ENCODE measurements at regions of chr13 and their contacts with region 1.

Region 1: DNA sequence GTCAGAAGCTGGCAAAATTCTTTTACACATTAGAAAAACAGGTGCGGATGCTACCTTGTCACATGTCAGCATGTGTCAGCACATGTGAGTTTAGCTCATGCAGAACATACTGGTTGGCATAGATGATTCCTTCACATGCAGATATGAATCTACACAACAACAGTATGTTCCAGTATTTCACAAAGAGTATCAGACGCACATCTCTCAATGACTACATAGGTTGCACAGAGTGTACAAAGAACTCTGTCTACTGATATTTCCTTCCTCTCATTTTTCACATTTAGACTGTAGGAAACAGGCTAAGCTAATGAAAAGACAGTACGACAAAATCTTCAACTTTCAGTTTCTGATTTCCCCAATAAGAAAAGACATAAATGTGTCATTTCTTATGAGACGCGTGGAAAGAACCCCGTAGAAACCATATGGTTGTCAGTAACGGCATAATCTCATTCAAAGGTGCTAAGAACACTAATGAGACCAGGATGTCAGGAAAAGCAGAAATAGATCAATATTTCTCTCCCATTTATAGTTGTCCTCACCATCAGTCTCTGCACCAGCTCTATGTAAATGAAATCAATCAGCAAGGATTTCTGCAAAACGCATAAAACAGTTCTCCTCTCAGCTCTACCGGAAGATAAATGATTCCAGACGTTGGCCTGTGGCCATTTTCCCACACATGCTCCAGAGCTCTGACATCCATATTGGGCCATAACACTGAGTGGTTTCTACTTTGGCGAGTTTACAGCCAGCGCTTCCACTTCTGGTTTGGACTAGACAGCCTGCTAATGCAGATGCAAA is 81.2 kb downstream of the STARD13 start:
- DNase-seq: peak; percentile 78
- ATAC-seq: peak; percentile 40
- H3K4me3 ChIP-seq: peak overlapping the region; percentile 74
- H3K27ac ChIP-seq: peak overlapping the region; percentile 95
- H3K4me1 ChIP-seq: peaks cover 42% of the 10 kb centered on the region
- H3K27me3 ChIP-seq: no peaks in the 10 kb centered on the region
- CTCF ChIP-seq: no peak
- EP300 ChIP-seq: no peak; a peak in 3 of 4 replicates
- POLR2A ChIP-seq: no peak
- RAD21 ChIP-seq: no peak

Region 2: DNA sequence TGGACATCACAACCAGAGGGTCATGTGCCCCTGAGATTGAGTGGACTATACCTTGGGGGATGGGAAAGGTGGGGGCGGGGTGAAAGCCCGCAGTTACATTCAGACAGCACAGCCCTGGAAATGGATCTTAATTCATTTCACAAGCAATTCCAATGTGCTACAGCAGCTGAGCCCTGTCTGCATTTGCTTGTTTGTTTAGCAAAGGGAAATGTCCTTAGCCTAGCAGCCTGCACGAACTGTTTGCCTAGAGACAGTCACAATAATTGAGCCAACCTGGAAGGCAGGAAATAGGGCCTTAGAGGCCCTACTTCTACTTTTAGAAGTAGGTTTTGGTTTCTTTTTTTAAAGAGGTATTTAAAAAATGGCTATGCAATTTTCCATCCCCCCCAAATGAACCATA is 365.4 kb before region 1 on chr13:
- CTCF ChIA-PET with region 1: no interaction called
- POLR2A ChIA-PET with region 1: no interaction called
- RAD21 ChIA-PET with region 1: no interaction called
- SMC1A ChIA-PET with region 1: no interaction called
- in situ Hi-C with region 1: no loop called
- intact Hi-C with region 1: loop called (anchors 10 kb)
- DNase-seq: no peak
- ATAC-seq: peak; percentile 83
- H3K4me3 ChIP-seq: peak overlapping the region; percentile 14; the same call in 1 of the 2 replicates
- H3K27ac ChIP-seq: peak overlapping the region; percentile 84
- H3K4me1 ChIP-seq: peaks cover 40% of the 10 kb centered on the region
- H3K27me3 ChIP-seq: no peaks in the 10 kb centered on the region
- CTCF ChIP-seq: no peak
- EP300 ChIP-seq: peak; percentile 40 to 71; a peak in 1 of 4 replicates
- POLR2A ChIP-seq: no peak
- RAD21 ChIP-seq: 0 out of 2 replicates have a peak, but pooled peaks have one; percentile 8

Region 3: GRCh38 chr13:33188093-33188882 is 16.0 kb before region 1 on chr13:
- CTCF ChIA-PET with region 1: interaction called, 54 read pairs
- POLR2A ChIA-PET with region 1: interaction called, 262 read pairs
- RAD21 ChIA-PET with region 1: interaction called, 158 read pairs
- SMC1A ChIA-PET with region 1: interaction called, 218 read pairs
- in situ Hi-C with region 1: no loop called
- intact Hi-C with region 1: loop called (anchors 2 kb)
- DNase-seq: peak; percentile 79
- ATAC-seq: peak; percentile 75
- H3K4me3 ChIP-seq: peak overlapping the region; percentile 24; the same call in 1 of the 2 replicates
- H3K27ac ChIP-seq: peak overlapping the region; percentile 93
- H3K4me1 ChIP-seq: peaks cover 31% of the 10 kb centered on the region
- H3K27me3 ChIP-seq: no peaks in the 10 kb centered on the region
- CTCF ChIP-seq: no peak
- EP300 ChIP-seq: peak; percentile 49 to 56
- POLR2A ChIP-seq: no peak
- RAD21 ChIP-seq: peak; percentile 13; the same call in 1 of the 2 replicates

Region 4: DNA sequence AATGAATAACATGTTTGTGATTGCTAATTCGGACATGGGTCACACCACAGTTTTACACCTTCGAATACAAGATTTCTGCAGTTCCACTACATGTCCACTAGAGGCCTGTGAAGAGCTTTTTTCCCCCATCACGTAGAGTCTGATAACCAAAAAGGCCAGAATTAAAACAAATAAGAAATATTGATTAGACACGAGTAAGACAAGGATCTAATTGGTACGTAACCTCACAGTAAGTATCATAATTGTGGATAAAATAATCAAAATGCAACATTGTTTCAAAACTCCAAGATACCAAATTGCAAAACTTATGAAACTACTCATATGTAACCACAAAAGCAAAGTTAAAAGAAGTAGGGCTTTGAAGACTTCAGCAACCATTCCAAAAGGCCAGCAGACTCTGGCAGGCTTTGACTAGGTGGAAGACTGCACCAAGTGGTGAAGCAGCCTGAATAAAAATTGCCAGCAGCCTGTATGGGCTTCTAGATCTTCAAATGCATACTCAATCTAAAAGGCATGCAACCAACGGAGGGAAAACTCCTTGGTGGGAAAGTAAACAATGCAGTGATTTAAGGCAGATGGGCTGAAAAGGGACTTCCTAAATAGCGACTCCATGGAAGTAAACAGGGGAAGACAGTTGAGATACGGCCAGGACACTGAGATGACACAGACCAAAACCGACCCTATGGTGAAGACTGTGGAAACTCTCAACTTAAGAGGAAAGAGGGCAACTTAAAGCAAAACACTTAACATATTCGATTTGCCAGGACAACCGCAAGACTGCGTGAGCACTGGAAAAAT is 24.5 kb after region 1 on chr13:
- CTCF ChIA-PET with region 1: interaction called, 13 read pairs
- POLR2A ChIA-PET with region 1: interaction called, 3 read pairs
- RAD21 ChIA-PET with region 1: interaction called, 18 read pairs
- SMC1A ChIA-PET with region 1: interaction called, 17 read pairs
- in situ Hi-C with region 1: no loop called
- intact Hi-C with region 1: no loop called
- DNase-seq: no peak
- ATAC-seq: peak; percentile 94
- H3K4me3 ChIP-seq: no peak overlapping the region
- H3K27ac ChIP-seq: no peak overlapping the region
- H3K4me1 ChIP-seq: no peaks in the 10 kb centered on the region
- H3K27me3 ChIP-seq: no peaks in the 10 kb centered on the region
- CTCF ChIP-seq: peak; percentile 83 to 98 (median 94)
- EP300 ChIP-seq: no peak
- POLR2A ChIP-seq: no peak
- RAD21 ChIP-seq: peak; percentile 98

Region 5: GRCh38 chr13:33817901-33818706 is 613.8 kb after region 1 on chr13 and contains the start of gene RFC3:
- CTCF ChIA-PET with region 1: no interaction called
- POLR2A ChIA-PET with region 1: no interaction called
- RAD21 ChIA-PET with region 1: no interaction called
- SMC1A ChIA-PET with region 1: no interaction called
- in situ Hi-C with region 1: no loop called
- intact Hi-C with region 1: loop called (anchors 10 kb)
- DNase-seq: peak; percentile 69
- ATAC-seq: peak; percentile 95
- H3K4me3 ChIP-seq: peak within 1 kb of the TSS; percentile 96
- H3K27ac ChIP-seq: peak within 1 kb of the TSS; percentile 77
- H3K4me1 ChIP-seq: no peaks in the 10 kb centered on the region
- H3K27me3 ChIP-seq: no peaks in the 10 kb centered on the region
- CTCF ChIP-seq: no peak
- EP300 ChIP-seq: 0 out of 4 replicates have a peak, but pooled peaks of 1 of the 2 experiments have one; percentile 64
- POLR2A ChIP-seq: peak; percentile 89
- RAD21 ChIP-seq: 0 out of 2 replicates have a peak, but pooled peaks have one; percentile 3
- polyA plus RNA-seq, gene RFC3: 88.9 to 95.9 TPM